WTC11 (cell line): ENCODE measurements at regions of chr10 and their contacts with region 1.

Region 1: GRCh38 chr10:30722956-30723620 is 93.5 kb upstream of the LYZL2 start:
- DNase-seq: no peak
- ATAC-seq: peak; percentile 20
- H3K4me3 Mint-ChIP-seq: no peak overlapping the region
- H3K27ac Mint-ChIP-seq: peak overlapping the region; percentile 37
- H3K4me1 Mint-ChIP-seq: peaks cover 63% of the 10 kb centered on the region
- H3K27me3 Mint-ChIP-seq: peaks cover 2% of the 10 kb centered on the region
- CTCF ChIP-seq: no peak

Region 2: DNA sequence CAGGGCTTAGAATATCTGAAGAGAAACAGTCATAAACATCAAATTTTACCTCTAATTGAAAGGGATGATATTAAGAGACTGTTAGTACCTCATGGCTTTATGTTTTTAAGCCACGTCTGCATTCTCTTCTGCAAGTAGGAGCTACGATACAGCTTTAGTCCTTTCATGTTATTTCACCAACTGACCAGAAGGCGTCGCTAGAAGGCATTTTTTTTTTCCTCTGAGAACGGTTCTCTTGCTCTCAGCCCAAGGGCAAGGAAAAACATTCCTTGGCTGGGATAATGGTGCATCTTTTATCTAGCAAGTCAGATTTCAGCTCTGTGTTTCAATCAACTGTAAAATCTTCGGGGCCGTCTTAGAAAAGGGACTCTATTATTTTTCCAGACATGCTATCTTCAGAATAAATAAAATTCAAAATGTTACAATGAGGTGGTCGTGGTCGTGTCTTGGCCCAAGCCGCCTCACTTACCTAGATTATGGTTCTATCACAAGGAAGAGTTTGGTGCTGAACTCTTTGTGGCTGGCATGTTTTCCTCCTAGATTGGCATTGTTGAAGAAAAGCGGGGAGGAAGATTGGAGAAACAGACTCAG is 52.0 kb before region 1 on chr10:
- CTCF ChIA-PET with region 1: interaction called, 11 read pairs
- POLR2A ChIA-PET with region 1: no interaction called
- DNase-seq: peak; percentile 24
- ATAC-seq: peak; percentile 80
- H3K4me3 Mint-ChIP-seq: no peak overlapping the region
- H3K27ac Mint-ChIP-seq: no peak overlapping the region
- H3K4me1 Mint-ChIP-seq: peaks cover 6% of the 10 kb centered on the region; the same call in 1 of the 2 replicates
- H3K27me3 Mint-ChIP-seq: no peaks in the 10 kb centered on the region
- CTCF ChIP-seq: peak; percentile 73

Region 3: GRCh38 chr10:30705101-30705624 is 17.9 kb before region 1 on chr10:
- CTCF ChIA-PET with region 1: interaction called, 12 read pairs
- POLR2A ChIA-PET with region 1: no interaction called
- DNase-seq: no peak
- ATAC-seq: no peak; the same call in 1 of the 2 replicates
- H3K4me3 Mint-ChIP-seq: no peak overlapping the region
- H3K27ac Mint-ChIP-seq: no peak overlapping the region
- H3K4me1 Mint-ChIP-seq: peaks cover 48% of the 10 kb centered on the region
- H3K27me3 Mint-ChIP-seq: peaks cover 6% of the 10 kb centered on the region; the same call in 1 of the 2 replicates
- CTCF ChIP-seq: no peak